ENCODE measurements at regions of chr16 and their contacts with region 1.

Region 1: GRCh38 chr16:1964506-1965395 is at the start of gene RPS2:
- DNase-seq: peak; percentile 97 to 99 (median 99)
- H3K4me3 ChIP-seq: peak within 1 kb of the TSS; percentile 78 to 86
- H3K4me3 Mint-ChIP-seq: peak within 1 kb of the TSS; percentile 91 to 97 (median 94)
- H3K27ac ChIP-seq: peak within 1 kb of the TSS; percentile 97
- H3K27ac Mint-ChIP-seq: peak within 1 kb of the TSS; percentile 97 to 99 (median 98)
- H3K4me1 ChIP-seq: peaks cover 50% of the 10 kb centered on the region
- H3K4me1 Mint-ChIP-seq: peaks cover 28 to 59% (median 42%) of the 10 kb centered on the region in 4 donors
- H3K27me3 ChIP-seq: no peaks in the 10 kb centered on the region
- H3K27me3 Mint-ChIP-seq: no peaks in the 10 kb centered on the region
- total RNA-seq, gene RPS2: 2,828 to 2,894 TPM

Region 2: GRCh38 chr16:1942810-1943726 is 21.7 kb before region 1 on chr16 and contains the start of gene MSRB1:
- CTCF ChIA-PET with region 1: interaction called, 4 read pairs
- POLR2A ChIA-PET with region 1: interaction called, 34 read pairs
- intact Hi-C with region 1: loop called (anchors 1 kb)
- DNase-seq: peak; percentile 97 to 99 (median 98)
- H3K4me3 ChIP-seq: peak within 1 kb of the TSS; percentile 52 to 90
- H3K4me3 Mint-ChIP-seq: peak within 1 kb of the TSS; percentile 82 to 91 (median 86)
- H3K27ac ChIP-seq: peak within 1 kb of the TSS; percentile 58
- H3K27ac Mint-ChIP-seq: peak within 1 kb of the TSS; percentile 64 to 91 (median 70)
- H3K4me1 ChIP-seq: peaks cover 21% of the 10 kb centered on the region
- H3K4me1 Mint-ChIP-seq: peaks cover 0 to 26% (median 7%) of the 10 kb centered on the region in 4 donors
- H3K27me3 ChIP-seq: no peaks in the 10 kb centered on the region
- H3K27me3 Mint-ChIP-seq: no peaks in the 10 kb centered on the region
- total RNA-seq, gene MSRB1: 9.3 to 10.6 TPM

Region 3: DNA sequence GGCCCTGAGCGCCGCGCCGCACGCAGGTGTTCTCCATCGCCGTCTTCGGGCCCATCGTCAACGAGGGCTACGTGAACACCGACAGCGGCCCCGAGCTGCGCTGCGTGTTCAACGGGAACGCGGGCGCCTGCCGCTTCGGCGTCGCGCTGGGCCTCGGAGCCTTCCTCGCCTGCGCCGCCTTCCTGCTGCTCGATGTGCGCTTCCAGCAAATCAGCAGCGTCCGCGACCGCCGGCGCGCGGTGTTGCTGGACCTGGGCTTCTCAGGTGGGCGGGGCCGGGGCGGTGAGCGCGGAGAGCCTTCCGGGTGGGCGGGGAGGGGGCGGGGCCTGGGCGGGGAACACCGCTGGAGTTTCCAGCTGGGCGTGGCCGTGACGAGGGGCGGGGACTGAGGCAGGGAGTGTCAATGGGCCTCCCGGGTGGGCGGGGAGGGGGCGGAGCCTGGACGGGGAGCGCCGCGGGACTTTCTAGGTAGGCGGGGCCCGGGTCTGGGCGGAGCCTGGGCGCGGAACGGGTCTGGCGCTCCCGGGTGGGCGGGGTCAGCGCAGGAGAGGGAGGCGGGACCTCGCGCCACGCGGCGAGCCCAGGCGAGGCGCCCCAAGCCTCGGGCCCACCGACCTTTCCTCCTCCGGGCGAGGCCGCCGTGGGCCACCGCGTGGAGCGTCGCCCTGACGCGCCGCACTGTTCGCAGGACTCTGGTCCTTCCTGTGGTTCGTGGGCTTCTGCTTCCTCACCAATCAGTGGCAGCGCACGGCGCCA is 27.4 kb after region 1 on chr16:
- CTCF ChIA-PET with region 1: interaction called, 6 read pairs
- POLR2A ChIA-PET with region 1: interaction called, 99 read pairs
- intact Hi-C with region 1: loop called (anchors 1 kb)
- DNase-seq: peak; percentile 92 to 99 (median 93)
- H3K4me3 ChIP-seq: peak overlapping the region in 1 of 2 donors; percentile 42
- H3K4me3 Mint-ChIP-seq: peak overlapping the region in 7 of 8 donors; percentile 40 to 84 (median 73)
- H3K27ac ChIP-seq: peak overlapping the region; percentile 61
- H3K27ac Mint-ChIP-seq: peak overlapping the region in 6 of 7 donors; percentile 62 to 88 (median 78)
- H3K4me1 ChIP-seq: peaks cover 22% of the 10 kb centered on the region
- H3K4me1 Mint-ChIP-seq: peaks cover 6 to 30% (median 16%) of the 10 kb centered on the region in 4 donors
- H3K27me3 ChIP-seq: no peaks in the 10 kb centered on the region
- H3K27me3 Mint-ChIP-seq: peaks cover 6 to 7% of the 10 kb centered on the region in 2 donors

Region 4: GRCh38 chr16:2047330-2048115 is 82.8 kb after region 1 on chr16 and contains the starts of genes NTHL1 and TSC2:
- CTCF ChIA-PET with region 1: no interaction called
- POLR2A ChIA-PET with region 1: interaction called, 12 read pairs
- intact Hi-C with region 1: no loop called
- DNase-seq: peak; percentile 88 to 91 (median 89)
- H3K4me3 ChIP-seq: peak within 1 kb of the TSS; percentile 81 to 82
- H3K4me3 Mint-ChIP-seq: peak within 1 kb of the TSS; percentile 91 to 96 (median 93)
- H3K27ac ChIP-seq: peak within 1 kb of the TSS; percentile 73
- H3K27ac Mint-ChIP-seq: peak within 1 kb of the TSS; percentile 42 to 91 (median 85)
- H3K4me1 ChIP-seq: peaks cover 24% of the 10 kb centered on the region
- H3K4me1 Mint-ChIP-seq: peaks cover 11 to 27% (median 17%) of the 10 kb centered on the region in 4 donors
- H3K27me3 ChIP-seq: no peaks in the 10 kb centered on the region
- H3K27me3 Mint-ChIP-seq: no peaks in the 10 kb centered on the region
- total RNA-seq, gene NTHL1: 9.3 to 12.0 TPM
- total RNA-seq, gene TSC2: 157 to 177 TPM

Region 5: GRCh38 chr16:2071454-2072202 is 106.9 kb after region 1 on chr16:
- CTCF ChIA-PET with region 1: no interaction called
- POLR2A ChIA-PET with region 1: no interaction called
- intact Hi-C with region 1: no loop called
- DNase-seq: no peak
- H3K4me3 ChIP-seq: no peak overlapping the region
- H3K4me3 Mint-ChIP-seq: no peak overlapping the region
- H3K27ac ChIP-seq: no peak overlapping the region
- H3K27ac Mint-ChIP-seq: no peak overlapping the region
- H3K4me1 ChIP-seq: no peaks in the 10 kb centered on the region
- H3K4me1 Mint-ChIP-seq: no peaks in the 10 kb centered on the region
- H3K27me3 ChIP-seq: no peaks in the 10 kb centered on the region
- H3K27me3 Mint-ChIP-seq: no peaks in the 10 kb centered on the region

Region 6: DNA sequence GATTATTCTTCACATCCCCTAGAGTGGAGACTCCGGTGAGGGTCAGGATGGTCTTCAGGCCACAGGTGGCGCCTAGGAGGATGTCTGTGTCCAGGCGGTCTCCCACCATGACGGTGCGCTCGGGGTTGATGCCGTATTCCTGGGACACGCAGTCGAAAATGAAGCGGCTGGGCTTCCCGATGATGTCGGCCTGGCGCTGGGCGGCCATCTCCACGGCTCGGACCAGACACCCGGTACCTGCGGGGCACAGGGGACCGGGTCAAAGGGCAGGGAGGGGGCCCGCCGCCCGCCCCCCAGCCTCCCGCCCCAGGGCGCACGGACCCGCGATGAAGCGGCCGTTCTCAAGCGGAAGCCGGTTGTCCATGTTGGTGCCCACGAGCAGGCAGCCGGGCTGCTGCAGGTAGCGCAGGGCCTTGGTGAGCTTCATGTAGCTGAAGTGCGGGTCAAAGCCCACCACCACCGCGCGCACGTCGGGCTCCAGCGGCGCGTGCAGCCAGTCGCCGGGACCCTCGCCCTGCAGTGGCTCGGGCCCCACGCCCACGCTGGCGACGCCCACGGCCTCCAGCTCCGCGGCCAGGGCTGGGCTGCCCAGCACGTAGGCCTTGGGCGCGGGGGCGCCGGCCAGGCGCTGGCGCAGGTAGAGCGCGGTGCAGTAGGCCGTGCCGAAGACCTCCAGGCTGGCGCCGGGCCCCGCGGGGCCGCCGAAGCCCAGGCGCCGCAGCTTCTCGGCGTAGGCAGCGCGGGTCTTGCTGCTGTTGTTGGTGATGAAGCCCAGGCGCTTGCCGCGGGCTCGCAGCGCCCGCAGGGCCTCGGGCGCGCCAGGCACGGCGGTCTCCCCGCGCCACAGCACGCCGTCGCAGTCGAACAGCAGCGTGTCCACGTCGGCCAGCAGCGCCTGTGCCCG is 249.3 kb after region 1 on chr16:
- CTCF ChIA-PET with region 1: no interaction called
- POLR2A ChIA-PET with region 1: interaction called, 11 read pairs
- intact Hi-C with region 1: no loop called
- DNase-seq: no peak
- H3K4me3 ChIP-seq: peak overlapping the region in 1 of 2 donors; percentile 51
- H3K4me3 Mint-ChIP-seq: peak overlapping the region; percentile 74 to 80 (median 77)
- H3K27ac ChIP-seq: peak overlapping the region; percentile 55
- H3K27ac Mint-ChIP-seq: peak overlapping the region in 4 of 7 donors; percentile 13 to 83 (median 28)
- H3K4me1 ChIP-seq: peaks cover 20% of the 10 kb centered on the region
- H3K4me1 Mint-ChIP-seq: peaks cover 8 to 27% (median 17%) of the 10 kb centered on the region in 4 donors
- H3K27me3 ChIP-seq: no peaks in the 10 kb centered on the region
- H3K27me3 Mint-ChIP-seq: no peaks in the 10 kb centered on the region

Measured in CD4-positive, alpha-beta memory T cell (primary cell).